HEK293 (cell line): ENCODE measurements at regions of chr1 and their contacts with region 1.

Region 1: DNA sequence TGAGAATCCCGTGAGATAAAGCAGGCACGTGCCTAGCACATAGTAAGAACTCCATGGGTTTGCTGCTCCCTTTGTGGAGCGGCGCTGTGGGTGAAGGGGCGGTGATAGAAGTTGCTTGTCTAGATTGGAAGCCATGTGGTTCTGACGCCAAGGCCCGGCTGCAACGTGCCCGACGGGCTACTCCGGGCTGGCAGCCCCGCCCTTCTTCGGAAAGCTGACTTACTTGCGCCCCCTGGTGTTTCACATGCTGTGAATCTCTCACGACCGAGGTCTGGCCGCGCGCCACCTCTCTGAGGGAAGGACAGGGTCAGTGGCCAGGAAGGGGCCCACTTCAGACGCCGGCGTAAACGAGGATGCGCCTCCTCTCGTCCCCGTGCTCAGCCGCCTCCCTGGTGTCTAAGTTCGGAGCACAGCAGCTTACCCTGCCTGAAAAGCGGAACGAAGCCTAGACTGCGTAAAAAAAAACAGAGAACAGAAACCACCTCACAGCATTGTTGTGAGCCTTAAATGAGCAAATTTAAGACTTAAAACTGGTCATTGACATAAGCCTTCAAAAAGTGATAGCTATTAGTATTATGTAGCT is 42.6 kb upstream of the WNT2B start:
- H3K4me3 ChIP-seq: no peak overlapping the region
- H3K27ac ChIP-seq: no peak overlapping the region
- H3K4me1 ChIP-seq: no peaks in the 10 kb centered on the region
- CTCF ChIP-seq: peak; percentile 96

Region 2: GRCh38 chr1:112251766-112252506 is 214.2 kb before region 1 on chr1:
- CTCF ChIA-PET with region 1: no interaction called
- POLR2A ChIA-PET with region 1: no interaction called
- H3K4me3 ChIP-seq: no peak overlapping the region
- H3K27ac ChIP-seq: no peak overlapping the region
- H3K4me1 ChIP-seq: no peaks in the 10 kb centered on the region
- CTCF ChIP-seq: no peak

Region 3: GRCh38 chr1:112395821-112396652 is 70.1 kb before region 1 on chr1 and contains the start of gene CTTNBP2NL:
- CTCF ChIA-PET with region 1: interaction called, 65 read pairs
- POLR2A ChIA-PET with region 1: interaction called, 8 read pairs
- H3K4me3 ChIP-seq: peak within 1 kb of the TSS; percentile 71
- H3K27ac ChIP-seq: peak within 1 kb of the TSS; percentile 8; the same call in 1 of the 2 replicates
- H3K4me1 ChIP-seq: peaks cover 16% of the 10 kb centered on the region
- CTCF ChIP-seq: no peak

Region 4: GRCh38 chr1:112445596-112445995 is 20.6 kb before region 1 on chr1:
- CTCF ChIA-PET with region 1: interaction called, 15 read pairs
- POLR2A ChIA-PET with region 1: no interaction called
- H3K4me3 ChIP-seq: no peak overlapping the region
- H3K27ac ChIP-seq: no peak overlapping the region
- H3K4me1 ChIP-seq: no peaks in the 10 kb centered on the region
- CTCF ChIP-seq: no peak

Region 5: DNA sequence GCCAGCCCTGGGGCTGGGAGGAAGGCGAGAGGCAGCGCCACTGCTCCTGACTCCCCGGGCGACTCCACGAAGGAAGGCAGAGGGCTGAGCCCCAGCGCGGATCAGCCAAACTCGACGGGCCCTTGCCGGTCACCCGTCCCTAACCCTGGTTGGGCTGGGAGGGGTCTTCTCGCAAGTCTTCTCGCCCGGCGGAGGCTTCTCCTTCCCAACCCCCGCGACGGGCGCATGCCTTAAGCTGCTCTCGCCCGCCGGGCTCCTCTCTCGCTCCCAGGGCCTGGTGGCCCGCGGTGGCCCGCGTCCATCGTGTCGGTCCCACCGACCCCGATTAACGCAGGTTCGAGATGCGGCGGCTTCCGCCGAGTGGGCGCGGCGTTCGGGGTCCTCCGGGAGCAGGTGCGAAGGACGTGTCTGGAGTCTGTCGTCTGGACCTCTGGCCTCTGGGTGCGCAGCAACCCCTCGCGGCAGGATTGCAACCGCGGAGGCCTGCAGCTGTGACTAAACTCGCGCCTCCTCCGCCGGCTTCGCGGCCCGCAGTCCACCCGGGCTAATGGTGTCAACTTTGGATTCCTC is 277.9 kb after region 1 on chr1:
- CTCF ChIA-PET with region 1: no interaction called
- POLR2A ChIA-PET with region 1: no interaction called
- H3K4me3 ChIP-seq: no peak overlapping the region
- H3K27ac ChIP-seq: no peak overlapping the region
- H3K4me1 ChIP-seq: no peaks in the 10 kb centered on the region
- CTCF ChIP-seq: no peak